ENCODE measurements at regions of chr2 and their contacts with region 1.

Region 1: DNA sequence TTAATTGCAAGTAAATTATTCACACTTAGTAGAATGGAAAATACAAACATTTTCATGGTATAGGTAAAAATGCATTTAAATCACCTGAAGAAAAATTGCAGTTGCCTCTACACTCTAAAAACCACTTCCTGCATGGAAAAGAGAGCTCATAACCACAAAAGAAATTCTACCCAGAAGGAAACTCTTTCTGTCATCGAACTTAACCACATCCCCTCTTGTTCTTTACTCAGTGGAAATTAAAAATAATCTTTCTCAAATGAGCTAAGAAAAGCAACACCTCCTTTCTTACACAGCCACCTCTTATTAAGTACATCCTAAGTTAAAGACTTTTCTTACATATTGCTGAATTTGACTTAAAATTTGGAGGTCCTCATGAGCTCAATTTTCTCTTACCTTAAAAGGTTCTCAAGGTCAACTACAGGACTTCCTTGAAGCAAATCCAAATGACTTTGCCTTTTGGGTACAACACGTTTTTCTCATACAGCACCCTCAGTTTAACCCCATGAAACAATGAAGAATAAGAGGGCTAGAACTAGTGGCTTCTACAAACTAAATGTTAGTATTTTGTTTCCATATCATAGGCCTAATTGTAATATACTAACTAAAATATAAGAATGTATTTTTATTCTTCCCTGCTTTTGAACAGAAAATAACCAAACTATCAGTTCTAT is 109.1 kb upstream of the CRIM1 start:
- DNase-seq: no peak
- ATAC-seq: peak; percentile 81
- H3K4me3 Mint-ChIP-seq: peak overlapping the region; percentile 62
- H3K27ac Mint-ChIP-seq: peak overlapping the region; percentile 94
- H3K4me1 Mint-ChIP-seq: peaks cover 62% of the 10 kb centered on the region
- H3K27me3 Mint-ChIP-seq: peaks cover 2% of the 10 kb centered on the region
- CTCF ChIP-seq: no peak

Region 2: GRCh38 chr2:36147670-36148390 is 98.6 kb before region 1 on chr2:
- CTCF ChIA-PET with region 1: interaction called, 3 read pairs
- POLR2A ChIA-PET with region 1: no interaction called
- intact Hi-C with region 1: loop called (anchors 5 kb)
- DNase-seq: no peak
- ATAC-seq: peak; percentile 88
- H3K4me3 Mint-ChIP-seq: no peak overlapping the region
- H3K27ac Mint-ChIP-seq: no peak overlapping the region
- H3K4me1 Mint-ChIP-seq: peaks cover 17% of the 10 kb centered on the region
- H3K27me3 Mint-ChIP-seq: peaks cover 1% of the 10 kb centered on the region
- CTCF ChIP-seq: no peak

Region 3: GRCh38 chr2:36287363-36288275 is 41.2 kb after region 1 on chr2:
- CTCF ChIA-PET with region 1: no interaction called
- POLR2A ChIA-PET with region 1: no interaction called
- intact Hi-C with region 1: loop called (anchors 2 kb)
- DNase-seq: peak; percentile 66
- ATAC-seq: peak; percentile 84
- H3K4me3 Mint-ChIP-seq: no peak overlapping the region
- H3K27ac Mint-ChIP-seq: peak overlapping the region; percentile 80
- H3K4me1 Mint-ChIP-seq: peaks cover 19% of the 10 kb centered on the region
- H3K27me3 Mint-ChIP-seq: no peaks in the 10 kb centered on the region
- CTCF ChIP-seq: no peak